ENCODE measurements at regions of chr10 and their contacts with region 1.

Region 1: DNA sequence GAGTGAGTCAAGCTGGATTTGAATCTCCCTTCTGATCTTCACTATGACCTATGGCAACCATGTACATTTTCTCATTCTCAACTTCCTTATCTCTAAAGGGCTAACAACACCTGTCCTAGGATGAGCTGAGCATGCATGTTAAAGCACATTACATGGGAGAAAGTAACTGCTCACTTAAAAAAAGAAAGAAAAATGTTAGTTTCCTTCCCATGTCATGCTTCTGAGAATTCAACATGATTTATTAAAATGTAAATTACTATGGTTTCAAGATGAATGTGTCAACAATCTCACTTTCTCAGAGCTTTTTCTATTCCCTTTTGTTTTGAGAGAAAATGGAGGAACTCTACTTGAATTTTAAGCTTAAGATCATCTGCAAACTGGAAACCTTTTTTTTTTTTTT is 295.3 kb downstream of the SKIDA1 start:
- DNase-seq: no peak
- H3K4me3 ChIP-seq: no peak overlapping the region
- H3K27ac ChIP-seq: no peak overlapping the region
- H3K4me1 ChIP-seq: no peaks in the 10 kb centered on the region
- H3K27me3 ChIP-seq: no peaks in the 10 kb centered on the region
- CTCF ChIP-seq: no peak

Region 2: GRCh38 chr10:21160116-21160515 is 70.1 kb before region 1 on chr10:
- CTCF ChIA-PET with region 1: no interaction called
- POLR2A ChIA-PET with region 1: no interaction called
- intact Hi-C with region 1: no loop called
- DNase-seq: no peak
- H3K4me3 ChIP-seq: no peak overlapping the region
- H3K27ac ChIP-seq: no peak overlapping the region
- H3K4me1 ChIP-seq: no peaks in the 10 kb centered on the region
- H3K27me3 ChIP-seq: no peaks in the 10 kb centered on the region
- CTCF ChIP-seq: no peak

Region 3: GRCh38 chr10:21208666-21209316 is 21.4 kb before region 1 on chr10:
- CTCF ChIA-PET with region 1: no interaction called
- POLR2A ChIA-PET with region 1: interaction called, 10 read pairs
- intact Hi-C with region 1: no loop called
- DNase-seq: no peak
- H3K4me3 ChIP-seq: no peak overlapping the region
- H3K27ac ChIP-seq: no peak overlapping the region
- H3K4me1 ChIP-seq: no peaks in the 10 kb centered on the region
- H3K27me3 ChIP-seq: no peaks in the 10 kb centered on the region
- CTCF ChIP-seq: no peak